Activated CD4-positive, alpha-beta memory T cell treated with anti-CD3 and anti-CD28 coated beads, Interleukin-2, amount 10 ng/mL, durations not matched to agents 7 days and 5 days (primary cell): ENCODE measurements at regions of chr1 and their contacts with region 1.

Region 1: DNA sequence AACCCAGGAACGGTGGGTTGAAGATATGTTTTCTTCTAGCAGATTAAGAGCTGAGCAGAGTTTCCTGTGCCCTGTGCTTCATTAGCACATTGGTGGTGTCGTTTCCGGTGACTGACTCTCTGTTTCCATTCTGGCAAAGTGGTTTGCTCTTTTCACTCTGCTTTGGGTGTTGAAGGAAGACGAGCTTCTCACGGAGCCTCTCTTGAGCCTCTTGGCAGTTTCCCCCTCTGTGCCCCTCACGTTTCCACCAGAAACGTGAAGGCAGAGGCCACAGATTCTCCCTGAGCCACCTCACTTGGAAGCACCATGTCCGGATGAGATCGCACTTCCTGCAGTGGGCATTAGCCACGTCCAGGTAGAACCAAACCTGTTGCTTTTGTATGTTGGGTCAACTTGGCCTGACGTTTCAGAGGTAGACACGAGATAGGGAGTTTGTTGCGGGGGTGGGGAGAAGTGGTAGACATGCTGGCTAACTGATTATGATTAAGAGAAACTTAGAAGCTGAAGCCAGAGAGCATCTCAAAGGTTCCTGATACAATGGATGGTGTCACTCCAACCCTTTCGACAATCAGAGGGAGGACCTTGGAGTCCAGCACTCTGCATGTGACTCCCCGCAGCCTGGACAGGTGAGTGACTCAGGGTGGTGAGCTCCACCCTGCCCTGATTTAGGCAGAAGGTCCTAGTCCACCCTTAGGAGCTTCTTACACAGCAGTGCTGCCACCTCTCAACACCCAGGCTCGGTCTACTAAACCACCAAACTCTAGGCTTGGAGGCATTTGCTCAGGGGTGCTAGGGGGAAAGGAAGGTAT is at the start of gene LAX1:
- DNase-seq: peak; percentile 87
- H3K4me3 Mint-ChIP-seq: peak within 1 kb of the TSS; percentile 95
- H3K27ac Mint-ChIP-seq: peak within 1 kb of the TSS; percentile 100
- H3K4me1 Mint-ChIP-seq: peaks cover 54% of the 10 kb centered on the region
- H3K27me3 Mint-ChIP-seq: no peaks in the 10 kb centered on the region
- total RNA-seq, gene LAX1: 22.7 to 23.2 TPM

Region 2: DNA sequence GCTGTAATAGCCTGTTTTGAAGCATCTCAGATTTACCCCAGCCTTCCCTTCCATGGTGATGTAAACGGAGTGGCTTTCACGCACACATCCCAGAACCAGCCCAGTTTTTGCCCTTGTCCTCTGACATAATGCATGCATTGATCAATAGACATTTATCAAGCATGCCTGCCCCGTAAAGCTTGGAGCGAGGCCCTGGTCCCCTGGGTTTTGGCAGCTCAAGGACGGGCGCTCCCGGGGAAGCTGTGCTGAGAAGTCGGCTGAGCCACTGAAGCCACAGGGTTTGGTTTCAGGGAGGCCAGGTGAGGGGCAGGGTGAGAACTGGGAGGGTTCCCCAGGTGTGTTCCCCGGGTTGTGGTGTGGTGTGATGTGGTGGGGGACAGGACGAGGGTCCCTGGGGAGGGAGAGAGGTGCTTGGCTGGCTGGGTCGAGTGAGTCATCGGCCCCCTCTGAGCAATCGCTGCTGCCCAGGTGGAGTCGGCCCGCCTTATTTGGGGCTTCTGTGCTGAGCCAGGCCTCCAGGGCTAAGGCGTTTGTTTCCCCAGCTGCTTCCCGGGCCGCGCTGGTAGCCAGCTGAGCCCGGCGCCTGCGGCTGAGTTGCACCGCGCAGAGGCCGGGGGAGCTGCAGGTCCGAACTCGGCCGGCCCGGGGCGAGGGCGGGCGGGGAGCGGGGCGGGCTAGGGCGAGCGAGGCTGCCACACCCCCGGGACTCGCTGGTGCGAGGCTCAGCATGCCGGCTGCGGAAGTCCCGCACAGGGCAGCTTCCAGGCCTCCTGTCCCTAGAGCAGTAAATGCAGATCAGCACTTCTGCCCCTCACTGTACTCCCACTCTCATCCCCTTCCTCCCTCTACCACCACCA is 115.0 kb before region 1 on chr1:
- CTCF ChIA-PET with region 1: interaction called, 3 read pairs
- POLR2A ChIA-PET with region 1: interaction called, 21 read pairs
- DNase-seq: peak; percentile 65
- H3K4me3 Mint-ChIP-seq: peak overlapping the region; percentile 67
- H3K27ac Mint-ChIP-seq: peak overlapping the region; percentile 98
- H3K4me1 Mint-ChIP-seq: peaks cover 81% of the 10 kb centered on the region
- H3K27me3 Mint-ChIP-seq: no peaks in the 10 kb centered on the region

Region 3: GRCh38 chr1:203744075-203744972 is 20.9 kb before region 1 on chr1:
- CTCF ChIA-PET with region 1: interaction called, 7 read pairs
- POLR2A ChIA-PET with region 1: interaction called, 55 read pairs
- DNase-seq: peak; percentile 38
- H3K4me3 Mint-ChIP-seq: peak overlapping the region; percentile 15
- H3K27ac Mint-ChIP-seq: peak overlapping the region; percentile 78
- H3K4me1 Mint-ChIP-seq: peaks cover 27% of the 10 kb centered on the region
- H3K27me3 Mint-ChIP-seq: no peaks in the 10 kb centered on the region

Region 4: GRCh38 chr1:203776636-203777035 is 11.4 kb after region 1 on chr1:
- CTCF ChIA-PET with region 1: interaction called, 4 read pairs
- POLR2A ChIA-PET with region 1: interaction called, 14 read pairs
- DNase-seq: no peak
- H3K4me3 Mint-ChIP-seq: no peak overlapping the region
- H3K27ac Mint-ChIP-seq: no peak overlapping the region
- H3K4me1 Mint-ChIP-seq: peaks cover 2% of the 10 kb centered on the region
- H3K27me3 Mint-ChIP-seq: no peaks in the 10 kb centered on the region

Region 5: DNA sequence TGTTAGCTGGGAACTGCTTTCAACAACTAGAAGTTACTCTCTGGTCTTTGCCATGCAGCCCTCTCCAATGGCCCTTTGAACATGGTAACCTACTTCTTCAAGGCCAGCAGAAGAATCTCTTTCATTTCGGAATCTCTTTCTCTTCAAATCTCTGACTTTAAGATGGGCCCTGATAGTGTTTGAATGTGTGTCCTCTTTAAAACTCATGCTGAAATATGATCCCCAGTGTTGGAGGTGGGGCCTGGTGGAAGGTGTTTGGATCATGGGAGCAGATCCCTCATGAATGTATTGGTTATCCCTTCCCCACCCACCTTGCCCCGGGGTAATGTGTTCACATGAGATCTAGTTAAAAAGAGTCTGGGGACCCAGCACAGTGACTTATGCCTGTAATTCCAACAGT is 253.2 kb after region 1 on chr1:
- CTCF ChIA-PET with region 1: no interaction called
- POLR2A ChIA-PET with region 1: no interaction called
- DNase-seq: no peak
- H3K4me3 Mint-ChIP-seq: no peak overlapping the region
- H3K27ac Mint-ChIP-seq: no peak overlapping the region
- H3K4me1 Mint-ChIP-seq: no peaks in the 10 kb centered on the region
- H3K27me3 Mint-ChIP-seq: peaks cover 2% of the 10 kb centered on the region